Activated CD4-positive, alpha-beta memory T cell treated with anti-CD3 and anti-CD28 coated beads for 36 hours (primary cell): ENCODE measurements at regions of chr5 and their contacts with region 1.

Region 1: GRCh38 chr5:141618804-141619554 is at the start of gene DIAPH1:
- DNase-seq: peak; percentile 99
- H3K4me3 Mint-ChIP-seq: peak within 1 kb of the TSS; percentile 91
- H3K27ac Mint-ChIP-seq: peak within 1 kb of the TSS; percentile 98
- H3K4me1 Mint-ChIP-seq: peaks cover 57% of the 10 kb centered on the region
- H3K27me3 Mint-ChIP-seq: no peaks in the 10 kb centered on the region
- total RNA-seq, gene DIAPH1: 225 to 227 TPM

Region 2: GRCh38 chr5:141320225-141321169 is 298.5 kb before region 1 on chr5 and contains the start of gene TAF7:
- CTCF ChIA-PET with region 1: interaction called, 3 read pairs
- POLR2A ChIA-PET with region 1: no interaction called
- intact Hi-C with region 1: loop called (anchors 1 kb)
- DNase-seq: peak; percentile 95
- H3K4me3 Mint-ChIP-seq: peak within 1 kb of the TSS; percentile 98
- H3K27ac Mint-ChIP-seq: peak within 1 kb of the TSS; percentile 99
- H3K4me1 Mint-ChIP-seq: peaks cover 23% of the 10 kb centered on the region
- H3K27me3 Mint-ChIP-seq: no peaks in the 10 kb centered on the region
- total RNA-seq, gene TAF7: 54.6 to 55.5 TPM

Region 3: DNA sequence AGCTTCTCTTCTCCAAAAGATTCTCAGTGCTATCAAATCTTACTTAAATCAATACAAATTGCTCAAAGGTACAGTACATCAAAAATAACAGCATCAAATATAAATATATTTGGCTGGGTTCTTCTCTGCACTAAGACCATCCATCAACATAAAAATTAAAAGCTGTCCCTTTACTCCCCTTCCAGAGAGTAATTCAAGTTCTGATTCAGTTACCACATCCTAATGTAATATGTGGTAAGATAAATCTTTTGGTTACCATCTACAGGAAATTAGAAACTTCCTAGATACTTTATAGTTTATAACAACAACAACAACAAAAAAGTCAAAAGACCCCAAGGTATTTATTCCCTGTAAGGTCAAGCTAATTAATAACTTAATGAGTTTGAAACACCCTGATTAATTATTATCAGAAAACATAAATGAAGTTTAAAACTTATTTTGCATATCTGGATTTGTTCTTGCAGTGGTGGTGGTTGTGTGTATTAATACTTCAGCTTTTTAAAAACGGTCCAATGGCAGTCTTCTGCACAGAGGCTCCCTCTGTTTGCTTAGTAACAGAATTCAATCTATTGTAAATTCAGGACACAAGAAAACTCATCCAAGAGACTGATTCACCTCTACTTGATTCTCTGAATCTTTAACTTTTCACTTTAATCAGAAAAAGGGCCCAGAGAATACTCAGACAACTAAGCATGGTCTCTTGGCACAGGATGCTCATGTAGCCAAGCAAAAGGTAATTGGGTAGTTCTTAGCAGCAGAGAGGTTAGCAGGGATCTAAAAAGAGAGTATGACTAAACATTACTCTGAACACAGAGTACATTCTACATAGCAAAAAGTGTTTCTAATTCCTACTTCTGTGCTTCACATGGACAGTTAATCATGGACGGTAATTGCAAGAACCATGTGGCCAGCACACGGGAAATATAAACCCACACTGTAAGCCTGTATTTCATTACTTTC is 20.3 kb before region 1 on chr5:
- CTCF ChIA-PET with region 1: interaction called, 364 read pairs
- POLR2A ChIA-PET with region 1: interaction called, 51 read pairs
- intact Hi-C with region 1: loop called (anchors 1 kb)
- DNase-seq: no peak
- H3K4me3 Mint-ChIP-seq: no peak overlapping the region
- H3K27ac Mint-ChIP-seq: peak overlapping the region; percentile 84
- H3K4me1 Mint-ChIP-seq: peaks cover 73% of the 10 kb centered on the region
- H3K27me3 Mint-ChIP-seq: no peaks in the 10 kb centered on the region

Region 4: GRCh38 chr5:141636413-141637122 is 17.6 kb after region 1 on chr5 and contains the starts of genes HDAC3 and RELL2:
- CTCF ChIA-PET with region 1: interaction called, 81 read pairs
- POLR2A ChIA-PET with region 1: interaction called, 44 read pairs
- intact Hi-C with region 1: loop called (anchors 1 kb)
- DNase-seq: peak; percentile 96
- H3K4me3 Mint-ChIP-seq: peak within 1 kb of the TSS; percentile 94
- H3K27ac Mint-ChIP-seq: peak within 1 kb of the TSS; percentile 80
- H3K4me1 Mint-ChIP-seq: peaks cover 47% of the 10 kb centered on the region
- H3K27me3 Mint-ChIP-seq: no peaks in the 10 kb centered on the region
- total RNA-seq, gene HDAC3: 65.2 to 71.5 TPM
- total RNA-seq, gene RELL2: 17.8 to 17.9 TPM

Region 5: DNA sequence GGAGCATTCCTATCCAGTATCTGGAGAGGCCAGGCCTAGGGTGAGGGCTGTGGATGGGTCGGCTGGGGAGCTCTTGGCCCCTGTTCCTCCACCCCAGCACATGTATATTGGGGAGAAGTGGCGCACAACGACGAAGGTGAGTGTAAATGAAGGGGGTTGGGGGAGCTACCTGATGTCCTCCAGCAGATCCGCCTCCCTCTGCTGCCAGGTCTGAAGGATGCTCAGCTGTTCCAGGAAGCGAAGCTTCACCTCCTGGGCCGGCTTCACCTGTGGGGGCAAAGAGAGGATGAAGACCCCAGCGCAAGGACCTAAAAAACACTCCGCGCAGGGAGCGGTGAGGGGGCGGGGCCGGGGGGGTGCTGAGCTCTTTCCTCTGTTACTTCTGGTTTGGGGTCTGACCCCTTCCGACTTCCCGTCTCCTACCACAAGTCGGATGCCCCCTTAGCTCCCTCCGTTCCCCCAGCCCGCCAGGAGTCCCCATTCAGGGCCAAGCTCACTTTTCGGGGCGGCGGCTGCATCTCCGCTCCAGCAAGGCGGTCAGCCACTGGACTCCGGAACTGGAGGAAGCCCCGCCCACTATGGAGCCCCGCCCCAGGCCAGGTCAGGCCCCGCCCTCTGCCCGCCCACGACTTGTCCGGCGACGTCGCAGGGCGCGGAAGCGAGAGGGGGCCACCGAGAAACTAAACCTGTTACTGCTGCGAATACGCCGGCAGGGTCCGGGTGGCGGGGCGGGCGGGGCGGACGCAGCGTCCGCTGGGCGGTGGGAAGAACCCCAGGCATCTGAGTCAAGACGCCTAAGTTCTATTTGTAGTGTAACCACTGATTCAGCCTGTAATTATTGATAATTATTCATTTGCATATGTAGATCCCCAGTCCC is 32.1 kb after region 1 on chr5 and contains the start of gene FCHSD1:
- CTCF ChIA-PET with region 1: interaction called, 6 read pairs
- POLR2A ChIA-PET with region 1: no interaction called
- intact Hi-C with region 1: loop called (anchors 1 kb)
- DNase-seq: peak; percentile 92
- H3K4me3 Mint-ChIP-seq: peak within 1 kb of the TSS; percentile 96
- H3K27ac Mint-ChIP-seq: peak within 1 kb of the TSS; percentile 89
- H3K4me1 Mint-ChIP-seq: peaks cover 22% of the 10 kb centered on the region
- H3K27me3 Mint-ChIP-seq: no peaks in the 10 kb centered on the region
- total RNA-seq, gene FCHSD1: 40.1 to 46.0 TPM